ENCODE measurements at regions of chr2 and their contacts with region 1.

Region 1: DNA sequence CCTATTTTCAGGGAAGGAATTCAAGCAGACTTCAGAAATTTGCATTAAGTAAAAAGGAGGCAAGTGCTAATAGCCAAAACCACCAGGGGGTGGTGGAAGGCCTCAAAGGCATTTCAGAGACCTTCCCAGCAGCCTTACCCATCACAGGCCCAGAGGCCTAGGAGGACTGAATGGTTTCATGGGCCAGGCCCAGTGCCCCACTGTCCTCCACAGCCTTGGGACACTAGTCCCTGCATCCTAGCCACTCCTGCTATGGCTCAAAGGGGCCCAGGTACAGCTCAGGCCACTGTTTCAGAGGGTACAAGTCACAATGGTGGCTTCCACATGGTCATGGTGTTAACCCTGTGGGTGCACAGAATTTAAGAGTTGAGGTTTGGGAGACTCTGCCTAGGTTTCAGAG is 58.6 kb upstream of the CHAC2 start:
- DNase-seq: no peak

Region 2: GRCh38 chr2:53672881-53673522 is 36.0 kb before region 1 on chr2:
- intact Hi-C with region 1: no loop called
- DNase-seq: no peak

Region 3: GRCh38 chr2:53740170-53740569 is 31.2 kb after region 1 on chr2:
- intact Hi-C with region 1: loop called in 1 of 2 experiments (anchors 2 kb)
- DNase-seq: no peak

Region 4: GRCh38 chr2:53786705-53787612 is 78.0 kb after region 1 on chr2 and contains the starts of genes ASB3 and ERLEC1:
- intact Hi-C with region 1: no loop called
- DNase-seq: peak; percentile 97
- total RNA-seq, gene ASB3: 12.4 to 13.0 TPM
- total RNA-seq, gene ERLEC1: 47.7 to 52.7 TPM